ENCODE measurements at regions of chr17 and their contacts with region 1.

Region 1: DNA sequence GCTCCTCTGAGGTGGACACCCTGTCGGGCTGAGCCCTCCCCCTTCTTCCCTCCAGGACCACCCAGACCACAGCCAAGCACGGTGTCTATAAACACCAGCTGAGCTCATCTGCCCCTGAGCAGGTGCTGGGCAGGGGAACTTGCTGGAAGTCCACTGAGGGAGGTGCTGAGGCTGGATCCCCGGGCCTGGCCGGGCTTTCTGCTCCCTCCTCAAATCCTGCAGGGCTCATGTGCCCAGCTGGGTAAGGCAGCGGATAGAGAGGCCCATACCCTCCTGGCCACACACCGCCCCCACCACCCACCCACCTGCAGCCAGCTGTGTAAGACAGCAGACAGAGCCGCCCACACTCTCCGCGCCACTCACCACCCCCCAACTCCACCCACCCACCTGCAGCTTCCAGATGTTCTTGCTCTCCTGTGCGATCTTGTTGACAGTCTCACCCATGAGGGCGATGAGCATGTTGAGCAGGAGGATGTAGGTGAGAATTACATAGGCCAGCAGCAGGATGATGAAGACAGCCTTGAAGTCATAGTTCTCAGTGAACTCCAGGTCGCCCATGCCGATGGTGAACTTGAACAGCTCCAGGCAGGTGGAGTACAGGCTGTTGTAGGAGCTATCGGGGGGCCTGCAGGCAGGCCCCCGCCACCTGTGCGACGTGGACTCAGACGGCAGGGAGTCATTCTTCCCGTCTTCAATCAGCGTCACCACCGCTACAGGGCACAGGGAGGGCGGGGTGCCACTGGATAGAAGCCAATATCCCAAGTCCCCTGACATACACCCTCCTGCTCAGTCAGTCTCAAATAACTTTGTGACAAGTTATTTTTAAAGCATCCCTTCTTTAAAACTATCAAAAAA is 15.9 kb upstream of the TRPV3 start:
- DNase-seq: peak; percentile 87
- H3K4me3 ChIP-seq: no peak overlapping the region
- H3K27ac ChIP-seq: peak overlapping the region; percentile 45
- H3K4me1 ChIP-seq: peaks cover 39% of the 10 kb centered on the region
- CTCF ChIP-seq: no peak

Region 2: DNA sequence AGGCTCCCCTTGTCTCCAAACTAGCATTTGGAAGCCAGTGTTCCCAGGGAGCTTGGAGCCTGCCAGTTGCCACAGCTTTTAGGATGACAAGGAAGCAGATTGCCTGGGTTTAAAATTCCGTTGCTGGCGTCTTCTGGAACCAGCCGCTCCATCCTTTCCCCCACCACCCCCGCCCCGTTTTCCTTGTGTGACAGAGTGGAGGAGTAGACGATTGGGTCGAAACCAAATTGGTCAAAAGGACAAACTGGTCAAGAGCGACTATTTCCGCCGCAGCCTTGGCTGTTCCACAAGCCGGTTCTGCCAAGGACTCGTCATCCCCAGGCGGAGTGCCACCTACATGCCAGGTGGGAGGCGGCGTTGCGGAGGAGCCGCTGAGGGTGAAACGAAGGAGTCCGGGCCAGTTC is 1652.5 kb before region 1 on chr17:
- CTCF ChIA-PET with region 1: no interaction called
- POLR2A ChIA-PET with region 1: no interaction called
- intact Hi-C with region 1: no loop called
- DNase-seq: no peak
- H3K4me3 ChIP-seq: no peak overlapping the region
- H3K27ac ChIP-seq: no peak overlapping the region
- H3K4me1 ChIP-seq: peaks cover 3% of the 10 kb centered on the region
- CTCF ChIP-seq: no peak

Region 3: DNA sequence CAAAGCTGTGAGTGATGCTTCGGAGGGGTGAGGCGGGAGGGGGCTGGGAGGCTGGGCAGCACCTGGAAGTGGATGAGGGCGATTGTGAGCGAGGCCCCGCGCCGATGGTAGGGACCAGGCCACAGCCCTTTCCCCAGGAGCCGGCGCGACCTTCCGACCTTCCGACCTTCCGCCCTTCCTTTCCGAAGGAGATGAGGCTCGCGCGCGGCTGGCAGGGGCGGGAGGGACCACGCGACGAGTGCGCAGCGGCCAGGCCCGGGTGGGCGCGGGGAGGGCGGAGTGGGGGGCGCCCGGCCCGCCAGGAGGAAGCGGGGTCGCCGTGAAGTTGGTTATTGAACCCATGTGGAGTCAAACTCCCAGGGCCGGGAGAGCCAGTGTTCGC is 720.8 kb before region 1 on chr17:
- CTCF ChIA-PET with region 1: interaction called, 19 read pairs
- POLR2A ChIA-PET with region 1: no interaction called
- intact Hi-C with region 1: no loop called
- DNase-seq: no peak
- H3K4me3 ChIP-seq: peak overlapping the region; percentile 75
- H3K27ac ChIP-seq: peak overlapping the region; percentile 80
- H3K4me1 ChIP-seq: peaks cover 69% of the 10 kb centered on the region
- CTCF ChIP-seq: no peak

Region 4: DNA sequence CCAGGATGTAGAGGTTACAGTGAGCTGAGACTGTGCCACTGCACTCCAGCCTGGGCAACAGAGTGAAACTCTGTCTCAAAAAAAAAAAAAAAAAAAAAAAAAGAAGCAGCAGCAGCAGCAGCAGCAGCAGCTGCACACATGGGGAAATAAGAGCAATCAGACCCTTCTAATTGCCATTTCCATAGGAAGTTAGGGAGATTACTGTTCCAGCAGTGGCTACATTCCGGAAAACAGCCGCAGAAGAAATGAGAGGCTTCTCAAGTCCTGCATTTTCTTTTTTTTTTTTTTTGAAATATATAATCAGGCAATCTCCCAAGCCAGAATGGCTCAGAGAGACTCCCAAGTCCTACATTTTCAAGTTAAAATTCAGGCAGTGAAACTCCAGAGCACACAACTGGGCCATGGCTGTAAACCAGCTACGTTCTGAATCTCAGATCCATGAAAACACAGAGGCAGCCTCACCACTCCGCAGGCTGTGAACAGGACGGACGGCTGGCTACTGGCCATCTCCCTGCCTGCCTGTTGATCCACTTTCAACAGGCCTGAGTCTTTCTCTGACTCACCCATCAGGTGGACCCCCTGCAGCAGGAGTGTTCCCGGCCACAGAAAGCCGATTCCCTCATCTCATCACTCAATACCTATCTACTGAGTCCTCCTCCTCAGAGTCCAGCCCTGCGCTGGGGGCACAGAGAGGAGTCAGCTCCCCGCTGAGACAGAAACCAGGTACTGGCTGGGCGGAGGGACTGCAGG is 20.8 kb after region 1 on chr17:
- CTCF ChIA-PET with region 1: no interaction called
- POLR2A ChIA-PET with region 1: no interaction called
- intact Hi-C with region 1: no loop called
- DNase-seq: no peak
- H3K4me3 ChIP-seq: no peak overlapping the region
- H3K27ac ChIP-seq: no peak overlapping the region
- H3K4me1 ChIP-seq: peaks cover 10% of the 10 kb centered on the region
- CTCF ChIP-seq: no peak

Measured in OCI-LY7 (cell line).